CD4-positive, alpha-beta T cell (primary cell): ENCODE measurements at regions of chr20 and their contacts with region 1.

Region 1: DNA sequence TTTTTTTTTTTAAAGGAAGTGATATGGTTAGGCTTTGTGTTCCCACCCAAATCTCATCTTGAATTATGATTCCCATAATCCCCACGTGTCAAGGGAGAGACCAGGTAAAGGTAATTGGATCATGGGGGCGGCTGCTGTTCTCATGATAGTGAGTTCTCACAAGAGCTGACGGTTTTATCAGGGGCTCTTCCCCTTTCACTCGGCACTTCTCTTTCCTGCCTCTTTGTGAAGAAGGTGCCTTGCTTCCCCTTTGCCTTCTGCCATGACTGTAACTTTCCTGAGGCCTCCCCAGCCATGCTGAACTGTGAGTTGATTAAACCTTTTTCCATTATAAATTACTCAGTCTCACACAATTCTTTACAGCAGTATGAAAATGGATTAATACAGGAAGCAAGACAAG is 64.3 kb downstream of the ZFP64 start:
- DNase-seq: peak in 1 of 14 experiments; percentile 19
- ATAC-seq: no peak
- H3K4me3 ChIP-seq: no peak overlapping the region
- H3K4me3 Mint-ChIP-seq: no peak overlapping the region
- H3K27ac ChIP-seq: no peak overlapping the region
- H3K27ac Mint-ChIP-seq: no peak overlapping the region
- H3K4me1 ChIP-seq: no peaks in the 10 kb centered on the region
- H3K4me1 Mint-ChIP-seq: peaks cover 5% of the 10 kb centered on the region
- H3K27me3 ChIP-seq: no peaks in the 10 kb centered on the region
- H3K27me3 Mint-ChIP-seq: no peaks in the 10 kb centered on the region
- CTCF ChIP-seq: no peak

Region 2: GRCh38 chr20:52047811-52048764 is 79.2 kb before region 1 on chr20:
- CTCF ChIA-PET with region 1: no interaction called
- POLR2A ChIA-PET with region 1: no interaction called
- intact Hi-C with region 1: no loop called
- DNase-seq: peak in 3 of 14 experiments; percentile 45 to 53 (median 47)
- ATAC-seq: no peak
- H3K4me3 ChIP-seq: no peak overlapping the region
- H3K4me3 Mint-ChIP-seq: no peak overlapping the region
- H3K27ac ChIP-seq: no peak overlapping the region
- H3K27ac Mint-ChIP-seq: no peak overlapping the region
- H3K4me1 ChIP-seq: peaks cover 8% of the 10 kb centered on the region
- H3K4me1 Mint-ChIP-seq: peaks cover 15% of the 10 kb centered on the region
- H3K27me3 ChIP-seq: no peaks in the 10 kb centered on the region
- H3K27me3 Mint-ChIP-seq: no peaks in the 10 kb centered on the region
- CTCF ChIP-seq: no peak

Region 3: GRCh38 chr20:52150440-52151258 is 23.3 kb after region 1 on chr20:
- CTCF ChIA-PET with region 1: interaction called, 13 read pairs
- POLR2A ChIA-PET with region 1: interaction called, 3 read pairs
- intact Hi-C with region 1: loop called (anchors 1 kb)
- DNase-seq: peak in 5 of 14 experiments; percentile 3 to 58 (median 41)
- ATAC-seq: peak; percentile 39
- H3K4me3 ChIP-seq: no peak overlapping the region
- H3K4me3 Mint-ChIP-seq: no peak overlapping the region
- H3K27ac ChIP-seq: no peak overlapping the region
- H3K27ac Mint-ChIP-seq: no peak overlapping the region
- H3K4me1 ChIP-seq: no peaks in the 10 kb centered on the region
- H3K4me1 Mint-ChIP-seq: no peaks in the 10 kb centered on the region
- H3K27me3 ChIP-seq: no peaks in the 10 kb centered on the region
- H3K27me3 Mint-ChIP-seq: no peaks in the 10 kb centered on the region
- CTCF ChIP-seq: peak; percentile 98